ENCODE measurements at regions of chr19 and their contacts with region 1.

Region 1: GRCh38 chr19:49983645-49984229 is 22.8 kb upstream of the SIGLEC11 start:
- DNase-seq: peak; percentile 26
- ATAC-seq: peak; percentile 86
- H3K4me3 ChIP-seq: no peak overlapping the region
- H3K27ac ChIP-seq: no peak overlapping the region
- H3K4me1 ChIP-seq: no peaks in the 10 kb centered on the region
- H3K27me3 ChIP-seq: no peaks in the 10 kb centered on the region
- CTCF ChIP-seq: peak; percentile 66 to 95 (median 89); a peak in 5 of 6 replicates
- POLR2A ChIP-seq: no peak
- RAD21 ChIP-seq: peak; percentile 85

Region 2: DNA sequence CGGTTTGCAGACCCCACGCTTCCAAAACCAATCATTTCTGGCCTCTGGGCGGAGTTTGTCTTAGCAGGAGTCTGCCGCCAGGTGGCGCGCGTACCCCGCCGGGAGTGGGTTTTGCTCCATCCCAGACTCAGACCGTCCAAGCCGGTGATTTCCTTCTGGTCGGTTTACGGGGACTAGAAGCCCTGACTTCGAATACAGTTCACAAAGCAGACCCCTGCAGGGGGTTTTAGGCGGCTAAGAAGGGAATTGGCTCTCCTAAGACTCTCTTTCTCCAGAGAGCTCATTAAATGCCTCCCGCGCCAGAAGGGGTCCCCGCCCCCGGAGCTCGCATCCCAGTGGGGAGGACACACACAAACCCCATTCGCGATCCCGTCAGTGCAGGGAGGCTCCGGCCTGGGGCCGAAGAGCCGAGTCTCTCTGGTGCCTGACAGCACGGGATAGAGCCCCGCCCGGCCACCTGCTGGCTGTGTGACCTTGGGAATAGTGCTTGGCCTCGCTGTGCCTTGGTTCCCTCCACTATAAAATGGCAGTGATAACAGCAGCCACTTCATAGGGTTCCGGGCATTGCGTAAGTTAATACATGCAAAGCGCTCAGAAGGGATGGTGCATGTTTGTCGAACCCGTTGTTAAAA is 45.9 kb before region 1 on chr19:
- CTCF ChIA-PET with region 1: interaction called, 3 read pairs
- POLR2A ChIA-PET with region 1: no interaction called
- RAD21 ChIA-PET with region 1: no interaction called
- intact Hi-C with region 1: loop called (anchors 1 kb)
- DNase-seq: peak; percentile 59
- ATAC-seq: peak; percentile 89
- H3K4me3 ChIP-seq: peak overlapping the region; percentile 41 to 52
- H3K27ac ChIP-seq: 0 out of 2 replicates have a peak overlapping the region, but pooled peaks have one; percentile 20
- H3K4me1 ChIP-seq: peaks cover 9 to 10% of the 10 kb centered on the region in 2 experiments; a peak in 3 of 4 replicates
- H3K27me3 ChIP-seq: no peaks in the 10 kb centered on the region
- CTCF ChIP-seq: peak; percentile 95 to 97 (median 97)
- POLR2A ChIP-seq: no peak
- RAD21 ChIP-seq: peak; percentile 99

Region 3: GRCh38 chr19:50003810-50004419 is 20.2 kb after region 1 on chr19:
- CTCF ChIA-PET with region 1: no interaction called
- POLR2A ChIA-PET with region 1: no interaction called
- RAD21 ChIA-PET with region 1: no interaction called
- intact Hi-C with region 1: no loop called
- DNase-seq: peak; percentile 73
- ATAC-seq: peak; percentile 94
- H3K4me3 ChIP-seq: peak overlapping the region; percentile 33 to 50
- H3K27ac ChIP-seq: peak overlapping the region; percentile 100
- H3K4me1 ChIP-seq: peaks cover 26 to 33% of the 10 kb centered on the region in 2 experiments
- H3K27me3 ChIP-seq: no peaks in the 10 kb centered on the region
- CTCF ChIP-seq: no peak
- POLR2A ChIP-seq: no peak
- RAD21 ChIP-seq: no peak; the same call in 1 of the 2 replicates

Region 4: DNA sequence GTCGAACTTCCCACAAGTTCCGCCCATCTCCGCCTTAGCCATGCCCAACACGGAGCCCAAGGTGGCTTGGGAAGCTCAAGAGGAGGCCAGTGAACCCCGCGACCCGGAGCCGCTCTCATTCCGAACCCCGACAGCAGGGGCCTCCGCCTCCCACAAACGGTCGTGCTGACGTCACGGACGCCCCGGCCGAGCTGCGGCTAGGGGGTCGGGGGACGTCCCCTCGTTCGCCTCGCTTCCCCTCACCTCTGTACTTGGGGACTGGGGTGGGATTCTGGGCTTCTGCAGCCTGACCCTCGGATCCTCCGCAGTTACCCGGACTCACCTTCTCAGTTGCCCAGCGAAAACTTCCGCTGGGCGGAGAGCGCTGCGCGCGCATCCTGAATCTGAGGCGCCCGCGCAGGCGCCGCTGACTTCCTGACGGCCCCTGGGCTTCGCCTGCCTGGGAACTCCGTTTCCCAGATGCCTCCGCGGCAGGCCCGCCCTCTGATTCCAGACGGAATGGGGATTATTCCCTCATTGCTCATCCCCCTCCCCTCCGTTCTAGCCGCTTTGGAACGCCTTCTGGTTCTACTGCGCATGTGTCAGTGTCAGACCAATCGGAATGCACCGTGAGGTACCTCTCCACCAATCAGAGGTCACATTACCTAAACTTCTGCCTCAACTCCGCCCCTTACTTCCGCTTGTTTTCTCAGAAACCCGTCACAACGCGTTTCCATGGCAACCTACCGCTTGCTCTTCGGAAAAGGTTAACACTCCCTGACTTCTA is 41.5 kb after region 1 on chr19 and contains the start of gene VRK3:
- CTCF ChIA-PET with region 1: no interaction called
- POLR2A ChIA-PET with region 1: no interaction called
- RAD21 ChIA-PET with region 1: no interaction called
- intact Hi-C with region 1: loop called (anchors 1 kb)
- DNase-seq: peak; percentile 100
- ATAC-seq: peak; percentile 94
- H3K4me3 ChIP-seq: peak within 1 kb of the TSS; percentile 68 to 100
- H3K27ac ChIP-seq: peak within 1 kb of the TSS; percentile 79
- H3K4me1 ChIP-seq: peaks cover 5 to 23% of the 10 kb centered on the region in 2 experiments; a peak in 2 of 4 replicates
- H3K27me3 ChIP-seq: no peaks in the 10 kb centered on the region
- CTCF ChIP-seq: no peak
- POLR2A ChIP-seq: no peak
- RAD21 ChIP-seq: no peak
- total RNA-seq, gene VRK3: 44.0 TPM

Region 5: GRCh38 chr19:50173140-50173539 is 189.4 kb after region 1 on chr19:
- CTCF ChIA-PET with region 1: no interaction called
- POLR2A ChIA-PET with region 1: no interaction called
- RAD21 ChIA-PET with region 1: no interaction called
- intact Hi-C with region 1: no loop called
- DNase-seq: no peak
- ATAC-seq: 0 out of 2 replicates have a peak, but pooled peaks have one; percentile 14
- H3K4me3 ChIP-seq: no peak overlapping the region
- H3K27ac ChIP-seq: no peak overlapping the region
- H3K4me1 ChIP-seq: peaks cover 0 to 15% of the 10 kb centered on the region in 2 experiments; a peak in 1 of 4 replicates
- H3K27me3 ChIP-seq: no peaks in the 10 kb centered on the region
- CTCF ChIP-seq: no peak
- POLR2A ChIP-seq: no peak
- RAD21 ChIP-seq: no peak